Heart right ventricle (tissue), 16 donors: ENCODE measurements at regions of chr3 and their contacts with region 1.

Region 1: GRCh38 chr3:102332205-102332604 is 102.6 kb upstream of the ZPLD1 start:
- DNase-seq: no peak
- ATAC-seq: no peak
- H3K4me3 ChIP-seq: no peak overlapping the region
- H3K27ac ChIP-seq: no peak overlapping the region
- H3K4me1 ChIP-seq: no peaks in the 10 kb centered on the region
- H3K27me3 ChIP-seq: no peaks in the 10 kb centered on the region
- CTCF ChIP-seq: no peak

Region 2: DNA sequence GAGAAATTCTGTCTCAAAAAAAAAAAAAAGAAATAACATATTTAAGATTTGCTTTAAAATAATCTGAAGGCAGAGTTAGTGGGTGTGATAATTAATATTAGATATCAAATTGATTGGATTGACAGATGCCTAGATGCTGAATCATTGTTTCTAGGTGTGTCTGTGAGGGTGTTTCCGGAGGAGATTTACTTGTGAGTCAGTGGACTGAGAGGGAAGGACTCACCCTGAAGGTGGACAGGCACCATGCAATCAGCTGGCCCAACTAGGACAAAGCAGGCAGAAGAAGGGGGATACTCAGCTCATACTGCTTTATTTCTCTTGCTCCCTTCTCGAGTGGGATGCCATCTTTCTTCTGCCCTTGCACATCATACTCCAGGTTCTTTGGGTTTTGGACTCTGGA is 629.0 kb before region 1 on chr3:
- intact Hi-C with region 1: no loop called
- DNase-seq: no peak
- ATAC-seq: no peak
- H3K4me3 ChIP-seq: no peak overlapping the region
- H3K27ac ChIP-seq: no peak overlapping the region
- H3K4me1 ChIP-seq: no peaks in the 10 kb centered on the region
- H3K27me3 ChIP-seq: no peaks in the 10 kb centered on the region
- CTCF ChIP-seq: no peak

Region 3: DNA sequence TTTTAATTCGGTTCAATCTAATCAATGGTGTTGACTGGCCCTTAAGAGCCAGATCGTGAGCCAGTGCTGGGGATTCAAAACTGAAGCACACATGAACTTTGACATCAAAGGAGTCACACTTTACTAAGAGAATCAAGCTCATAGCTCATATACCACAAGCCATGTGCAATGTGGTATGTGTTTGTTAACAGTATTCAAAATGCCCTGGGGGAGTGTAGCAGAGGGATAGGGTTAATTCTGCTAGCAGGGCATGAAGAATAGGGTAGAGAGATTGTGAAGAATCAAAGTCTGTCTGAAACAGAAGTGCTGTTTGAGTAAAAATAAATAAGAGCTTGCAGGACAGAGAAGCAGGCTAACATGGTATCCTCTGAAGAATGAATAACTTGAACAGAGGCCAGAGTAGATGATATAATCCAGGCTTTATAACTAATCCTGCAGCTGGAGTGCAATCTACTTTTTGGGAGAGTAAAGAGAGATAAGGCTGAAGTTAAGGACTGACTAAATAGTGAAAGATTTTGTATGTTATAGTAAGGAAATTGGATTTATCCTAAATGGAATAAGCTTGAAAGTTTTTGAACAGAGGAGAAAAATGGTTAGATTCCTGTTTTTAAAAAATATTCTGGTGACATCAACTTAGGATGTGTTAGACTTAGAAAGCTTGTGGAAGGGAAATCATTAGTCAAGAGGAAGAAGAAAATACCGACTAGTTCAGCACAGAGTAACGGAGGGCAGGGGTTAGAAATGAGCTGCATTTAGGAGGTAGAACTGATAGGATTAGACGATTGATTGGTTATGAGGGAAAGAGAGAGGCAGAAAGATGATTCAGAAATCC is 190.9 kb before region 1 on chr3:
- intact Hi-C with region 1: loop called in 1 of 10 experiments (anchors 2 kb)
- DNase-seq: no peak
- ATAC-seq: peak in 7 of 8 donors; percentile 61 to 86 (median 79)
- H3K4me3 ChIP-seq: no peak overlapping the region
- H3K27ac ChIP-seq: peak overlapping the region in 8 of 10 donors; percentile 22 to 73 (median 62)
- H3K4me1 ChIP-seq: peaks cover 0 to 25% (median 16%) of the 10 kb centered on the region in 9 donors
- H3K27me3 ChIP-seq: no peaks in the 10 kb centered on the region
- CTCF ChIP-seq: no peak

Region 4: DNA sequence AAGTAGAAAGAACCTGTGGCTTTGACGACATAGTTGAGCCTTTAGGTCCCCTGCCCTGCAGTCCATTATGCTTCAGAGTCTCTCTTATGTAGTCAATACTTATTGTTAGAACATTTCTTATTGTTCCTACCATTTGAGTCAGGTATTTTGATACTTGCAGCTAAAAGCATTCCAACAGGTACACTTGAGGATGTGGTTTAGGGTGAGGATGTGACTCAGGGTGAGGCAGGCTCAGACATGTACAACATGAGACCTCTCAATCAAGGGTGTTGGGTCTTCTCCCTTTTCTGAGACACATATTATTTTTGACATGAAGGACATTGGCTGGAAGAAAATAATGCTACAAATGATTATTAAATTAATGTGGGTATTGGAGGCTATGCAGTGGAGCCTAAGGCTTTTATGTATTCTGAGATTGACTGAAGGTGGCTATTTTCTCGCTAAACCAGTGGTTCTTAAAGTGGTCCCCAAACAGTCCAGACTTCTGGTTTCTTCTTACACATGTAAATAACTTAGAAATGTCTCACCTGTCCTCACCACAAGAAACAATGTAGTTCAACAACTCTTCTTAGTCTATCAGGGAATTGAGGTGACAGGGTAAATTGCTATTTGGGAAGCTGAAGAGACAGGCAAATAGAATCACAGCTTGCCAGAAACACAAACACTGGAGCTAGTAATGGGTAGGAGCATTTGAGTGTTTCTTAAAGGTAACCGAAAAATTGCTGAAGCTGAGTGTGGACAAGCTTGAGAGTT is 32.9 kb before region 1 on chr3:
- intact Hi-C with region 1: no loop called
- DNase-seq: no peak
- ATAC-seq: no peak
- H3K4me3 ChIP-seq: no peak overlapping the region
- H3K27ac ChIP-seq: no peak overlapping the region
- H3K4me1 ChIP-seq: no peaks in the 10 kb centered on the region
- H3K27me3 ChIP-seq: peaks cover 0 to 5% (median 0%) of the 10 kb centered on the region in 7 donors
- CTCF ChIP-seq: no peak